PC-3 (cell line): ENCODE measurements at regions of chr6 and their contacts with region 1.

Region 1: GRCh38 chr6:2999618-3000557 is at the start of gene NQO2:
- DNase-seq: peak; percentile 89
- ATAC-seq: peak; percentile 78
- H3K4me3 ChIP-seq: peak within 1 kb of the TSS; percentile 80
- H3K27ac ChIP-seq: peak within 1 kb of the TSS; percentile 49
- H3K4me1 ChIP-seq: peaks cover 17% of the 10 kb centered on the region
- H3K27me3 ChIP-seq: no peaks in the 10 kb centered on the region
- CTCF ChIP-seq: no peak
- total RNA-seq, gene NQO2: 21.5 and 26.8 TPM in 2 replicates

Region 2: DNA sequence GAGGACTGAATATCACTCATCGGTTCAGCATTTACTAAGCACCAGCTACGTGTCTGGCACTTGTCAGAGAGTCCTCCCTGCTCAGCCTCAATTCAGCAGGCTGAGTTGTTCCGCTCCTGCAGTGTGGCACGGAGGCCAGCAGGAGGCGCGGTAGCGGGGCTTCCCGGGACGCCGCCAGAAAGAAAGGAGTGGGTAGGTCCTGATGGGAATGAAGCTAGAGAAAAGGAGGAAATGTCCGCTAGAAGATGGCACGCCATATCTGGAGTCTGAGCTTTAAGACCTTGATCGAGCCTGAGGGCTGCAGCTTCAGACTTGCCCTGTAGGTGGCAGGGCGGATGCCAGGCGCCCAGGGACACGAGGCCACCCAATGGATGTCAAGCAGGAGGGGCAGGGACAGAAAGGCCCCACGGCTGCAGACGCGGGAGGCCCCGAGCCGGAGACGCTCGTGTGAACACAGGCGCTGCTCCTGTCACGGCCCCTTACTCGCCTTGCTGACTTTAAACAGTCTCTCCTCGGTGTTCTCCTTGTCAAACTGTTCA is 47.3 kb before region 1 on chr6:
- CTCF ChIA-PET with region 1: interaction called, 10 read pairs
- POLR2A ChIA-PET with region 1: no interaction called
- intact Hi-C with region 1: no loop called
- DNase-seq: peak; percentile 76
- ATAC-seq: peak; percentile 79
- H3K4me3 ChIP-seq: no peak overlapping the region
- H3K27ac ChIP-seq: 0 out of 2 replicates have a peak overlapping the region, but pooled peaks have one; percentile 2
- H3K4me1 ChIP-seq: peaks cover 13% of the 10 kb centered on the region
- H3K27me3 ChIP-seq: no peaks in the 10 kb centered on the region
- CTCF ChIP-seq: peak; percentile 98

Region 3: DNA sequence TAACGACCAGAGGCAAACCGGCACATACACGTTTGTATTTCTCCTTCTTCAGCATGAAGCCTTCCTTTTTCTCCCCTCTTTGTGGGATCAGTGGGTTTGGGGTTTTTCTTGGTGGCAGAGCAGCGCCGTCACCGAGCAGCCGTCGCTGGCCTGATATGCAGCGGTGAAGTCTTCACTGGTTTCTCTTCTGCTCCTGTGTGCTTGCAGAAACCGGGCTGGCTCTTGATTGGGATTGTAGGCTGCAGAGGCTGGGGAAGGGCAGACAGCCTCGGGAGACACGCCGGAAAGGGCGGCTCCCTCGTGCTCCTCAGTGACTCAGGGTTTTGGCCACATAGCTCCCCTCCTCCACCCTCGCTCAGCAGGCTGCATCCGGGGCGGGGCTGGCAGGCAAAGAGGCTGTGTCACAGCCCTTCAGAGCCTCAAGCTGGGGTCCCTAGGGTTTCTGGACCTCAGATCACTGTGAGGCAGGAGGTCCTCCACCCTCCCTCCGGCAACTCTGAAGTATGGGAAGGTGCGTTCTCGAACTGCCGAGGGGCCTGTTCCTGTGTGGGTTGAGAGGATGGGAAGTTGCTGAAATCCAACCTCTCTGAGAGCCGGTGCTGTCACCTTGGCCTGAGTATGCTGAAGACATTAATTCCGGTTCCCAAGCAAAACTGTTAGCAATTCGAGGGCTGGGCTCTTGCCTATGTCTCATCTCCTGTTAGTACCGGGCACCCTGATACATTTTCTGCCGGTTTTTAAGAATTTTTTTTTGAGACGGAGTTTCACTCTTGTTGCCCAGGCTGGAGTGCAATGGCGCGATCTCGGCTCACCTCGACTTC is 24.0 kb after region 1 on chr6:
- CTCF ChIA-PET with region 1: interaction called, 4 read pairs
- POLR2A ChIA-PET with region 1: interaction called, 13 read pairs
- intact Hi-C with region 1: loop called (anchors 1 kb)
- DNase-seq: peak; percentile 90
- ATAC-seq: peak; percentile 98
- H3K4me3 ChIP-seq: no peak overlapping the region
- H3K27ac ChIP-seq: peak overlapping the region; percentile 75
- H3K4me1 ChIP-seq: peaks cover 24% of the 10 kb centered on the region
- H3K27me3 ChIP-seq: no peaks in the 10 kb centered on the region
- CTCF ChIP-seq: no peak

Region 4: GRCh38 chr6:3061501-3061941 is 61.6 kb after region 1 on chr6:
- CTCF ChIA-PET with region 1: interaction called, 10 read pairs
- POLR2A ChIA-PET with region 1: interaction called, 29 read pairs
- intact Hi-C with region 1: loop called (anchors 1 kb)
- DNase-seq: peak; percentile 93
- ATAC-seq: peak; percentile 18
- H3K4me3 ChIP-seq: no peak overlapping the region
- H3K27ac ChIP-seq: no peak overlapping the region
- H3K4me1 ChIP-seq: peaks cover 14% of the 10 kb centered on the region
- H3K27me3 ChIP-seq: no peaks in the 10 kb centered on the region
- CTCF ChIP-seq: no peak

Region 5: DNA sequence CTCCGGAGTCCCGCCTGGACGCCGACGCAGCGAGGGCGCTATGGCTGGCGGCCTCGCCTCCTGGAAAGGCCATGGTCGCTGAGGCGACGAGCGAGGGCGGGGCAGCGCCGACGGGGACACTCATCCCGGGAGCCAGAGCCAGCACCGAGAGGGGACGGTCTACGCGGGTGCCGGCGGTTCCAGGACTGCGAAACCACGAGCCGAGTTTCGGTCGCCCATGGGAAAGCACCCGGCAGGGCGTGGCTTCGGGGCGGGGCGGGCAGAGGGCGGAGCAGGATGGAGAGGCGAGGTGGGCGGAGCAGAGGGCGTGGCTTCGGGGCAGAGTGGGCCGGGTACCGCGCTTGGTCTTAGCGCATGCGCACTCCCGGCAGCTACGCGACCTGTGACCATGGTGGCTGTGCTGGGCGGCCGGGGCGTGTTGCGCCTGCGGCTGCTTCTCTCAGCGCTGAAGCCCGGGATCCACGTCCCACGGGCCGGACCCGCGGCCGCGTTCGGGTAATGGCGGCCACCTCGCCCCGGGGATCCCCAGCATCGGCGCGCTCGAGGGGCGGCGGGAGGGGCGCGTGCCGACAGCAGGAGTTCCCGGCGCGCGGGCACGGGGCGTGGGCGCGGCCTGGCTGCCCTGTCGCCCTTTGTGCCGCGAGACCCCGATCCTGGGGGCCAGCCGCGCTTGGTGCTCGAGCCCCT is 118.6 kb after region 1 on chr6 and contains the start of gene BPHL:
- CTCF ChIA-PET with region 1: no interaction called
- POLR2A ChIA-PET with region 1: no interaction called
- intact Hi-C with region 1: loop called (anchors 5 kb)
- DNase-seq: peak; percentile 95
- ATAC-seq: peak; percentile 90
- H3K4me3 ChIP-seq: peak within 1 kb of the TSS; percentile 88
- H3K27ac ChIP-seq: peak within 1 kb of the TSS; percentile 91
- H3K4me1 ChIP-seq: peaks cover 29% of the 10 kb centered on the region
- H3K27me3 ChIP-seq: no peaks in the 10 kb centered on the region
- CTCF ChIP-seq: no peak
- total RNA-seq, gene BPHL: 15.7 and 15.8 TPM in 2 replicates